Left cardiac atrium (tissue), 4 donors: ENCODE measurements at regions of chr13 and their contacts with region 1.

Region 1: GRCh38 chr13:94595950-94596574 is at the start of gene TGDS:
- DNase-seq: peak; percentile 94
- ATAC-seq: peak; percentile 99
- total RNA-seq, gene TGDS: 4.8 to 6.0 TPM

Region 2: GRCh38 chr13:94549232-94550061 is 46.6 kb before region 1 on chr13:
- intact Hi-C with region 1: loop called in 1 of 2 experiments (anchors 2 kb)
- DNase-seq: peak; percentile 95
- ATAC-seq: peak; percentile 96 to 97